CD4-positive, alpha-beta memory T cell (primary cell): ENCODE measurements at regions of chr1 and their contacts with region 1.

Region 1: GRCh38 chr1:211830330-211831142 is at the start of gene LPGAT1:
- DNase-seq: peak; percentile 62 to 78 (median 64)
- H3K4me3 ChIP-seq: peak within 1 kb of the TSS; percentile 43 to 69
- H3K4me3 Mint-ChIP-seq: peak within 1 kb of the TSS; percentile 90 to 95 (median 92)
- H3K27ac ChIP-seq: peak within 1 kb of the TSS; percentile 72
- H3K27ac Mint-ChIP-seq: peak within 1 kb of the TSS; percentile 86 to 96 (median 92)
- H3K4me1 ChIP-seq: peaks cover 68% of the 10 kb centered on the region
- H3K4me1 Mint-ChIP-seq: peaks cover 52 to 76% (median 59%) of the 10 kb centered on the region in 4 donors
- H3K27me3 ChIP-seq: no peaks in the 10 kb centered on the region
- H3K27me3 Mint-ChIP-seq: no peaks in the 10 kb centered on the region
- total RNA-seq, gene LPGAT1: 29.7 to 31.1 TPM

Region 2: GRCh38 chr1:211648980-211649934 is 181.3 kb before region 1 on chr1:
- CTCF ChIA-PET with region 1: no interaction called
- POLR2A ChIA-PET with region 1: no interaction called
- intact Hi-C with region 1: no loop called
- DNase-seq: peak in 3 of 5 donors; percentile 12 to 29 (median 27)
- H3K4me3 ChIP-seq: no peak overlapping the region
- H3K4me3 Mint-ChIP-seq: no peak overlapping the region
- H3K27ac ChIP-seq: no peak overlapping the region
- H3K27ac Mint-ChIP-seq: no peak overlapping the region
- H3K4me1 ChIP-seq: no peaks in the 10 kb centered on the region
- H3K4me1 Mint-ChIP-seq: peaks cover 0 to 1% (median 0%) of the 10 kb centered on the region in 4 donors
- H3K27me3 ChIP-seq: no peaks in the 10 kb centered on the region
- H3K27me3 Mint-ChIP-seq: no peaks in the 10 kb centered on the region

Region 3: DNA sequence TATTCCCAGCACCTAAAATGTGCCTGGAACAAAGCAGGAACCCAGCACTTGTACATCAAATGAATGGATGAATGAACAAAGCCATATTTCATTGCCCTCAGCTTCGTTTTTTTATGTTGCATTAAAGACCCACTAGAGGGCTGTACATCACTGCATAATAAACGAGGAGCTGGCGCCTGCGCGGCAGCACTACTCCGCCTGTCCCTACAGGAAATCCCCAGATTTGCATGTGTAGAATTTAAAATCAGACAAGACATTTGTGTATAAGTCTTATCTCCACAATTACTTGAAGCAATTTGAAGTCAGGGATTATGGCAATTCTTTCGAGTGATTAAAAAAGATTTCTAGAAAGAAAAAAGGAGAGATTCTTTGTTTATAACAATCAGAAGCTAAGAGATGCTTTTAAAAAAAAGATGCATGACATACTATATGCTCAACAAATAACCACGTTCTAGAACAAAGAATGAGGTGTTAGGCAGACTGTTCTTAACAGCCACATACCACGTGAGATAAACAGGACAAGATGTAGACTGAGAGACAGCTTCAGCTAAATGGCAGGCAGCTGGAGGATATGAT is 149.7 kb before region 1 on chr1:
- CTCF ChIA-PET with region 1: interaction called, 4 read pairs
- POLR2A ChIA-PET with region 1: interaction called, 3 read pairs
- intact Hi-C with region 1: loop called (anchors 2 kb)
- DNase-seq: peak; percentile 76 to 83 (median 82)
- H3K4me3 ChIP-seq: no peak overlapping the region
- H3K4me3 Mint-ChIP-seq: peak overlapping the region in 4 of 8 donors; percentile 0 to 56 (median 17)
- H3K27ac ChIP-seq: peak overlapping the region; percentile 61
- H3K27ac Mint-ChIP-seq: peak overlapping the region; percentile 77 to 98 (median 92)
- H3K4me1 ChIP-seq: peaks cover 15% of the 10 kb centered on the region
- H3K4me1 Mint-ChIP-seq: peaks cover 9 to 26% (median 12%) of the 10 kb centered on the region in 4 donors
- H3K27me3 ChIP-seq: no peaks in the 10 kb centered on the region
- H3K27me3 Mint-ChIP-seq: no peaks in the 10 kb centered on the region

Region 4: GRCh38 chr1:211789641-211790464 is 40.7 kb before region 1 on chr1:
- CTCF ChIA-PET with region 1: no interaction called
- POLR2A ChIA-PET with region 1: no interaction called
- intact Hi-C with region 1: loop called (anchors 5 kb)
- DNase-seq: no peak
- H3K4me3 ChIP-seq: no peak overlapping the region
- H3K4me3 Mint-ChIP-seq: no peak overlapping the region
- H3K27ac ChIP-seq: no peak overlapping the region
- H3K27ac Mint-ChIP-seq: no peak overlapping the region
- H3K4me1 ChIP-seq: no peaks in the 10 kb centered on the region
- H3K4me1 Mint-ChIP-seq: no peaks in the 10 kb centered on the region
- H3K27me3 ChIP-seq: no peaks in the 10 kb centered on the region
- H3K27me3 Mint-ChIP-seq: no peaks in the 10 kb centered on the region

Region 5: DNA sequence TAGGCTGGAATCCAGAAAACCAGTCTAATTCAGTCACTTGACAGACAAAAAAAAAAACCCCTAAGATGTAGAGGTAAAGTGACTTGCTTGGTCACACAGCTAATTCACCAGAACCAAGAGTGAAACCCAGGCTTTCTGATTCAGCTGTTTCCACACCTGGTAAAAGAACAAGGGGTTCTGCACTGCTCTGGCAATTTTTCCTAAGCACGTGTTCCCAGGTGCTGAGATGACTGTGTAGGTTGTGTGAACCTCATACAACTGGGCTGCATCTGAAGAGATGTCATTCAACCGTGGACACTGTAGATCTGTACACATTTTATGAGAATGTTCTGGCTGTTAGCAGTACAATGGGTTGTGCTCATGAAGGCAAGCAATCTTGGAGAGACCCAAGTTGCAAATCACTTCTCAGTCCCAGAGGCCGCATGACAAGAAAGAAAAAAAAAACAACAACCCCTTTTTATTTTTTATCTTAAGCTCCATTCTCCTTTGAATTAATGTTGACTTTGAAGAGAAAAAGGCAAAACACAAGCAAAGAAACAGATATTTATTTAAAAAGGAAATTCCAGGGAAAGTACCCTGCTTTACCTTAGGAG is 109.4 kb after region 1 on chr1:
- CTCF ChIA-PET with region 1: no interaction called
- POLR2A ChIA-PET with region 1: no interaction called
- intact Hi-C with region 1: loop called (anchors 5 kb)
- DNase-seq: no peak
- H3K4me3 ChIP-seq: no peak overlapping the region
- H3K4me3 Mint-ChIP-seq: peak overlapping the region in 2 of 8 donors; percentile 45 to 48
- H3K27ac ChIP-seq: no peak overlapping the region
- H3K27ac Mint-ChIP-seq: peak overlapping the region in 5 of 7 donors; percentile 5 to 57 (median 39)
- H3K4me1 ChIP-seq: peaks cover 32% of the 10 kb centered on the region
- H3K4me1 Mint-ChIP-seq: peaks cover 18 to 36% (median 23%) of the 10 kb centered on the region in 4 donors
- H3K27me3 ChIP-seq: no peaks in the 10 kb centered on the region
- H3K27me3 Mint-ChIP-seq: no peaks in the 10 kb centered on the region

Region 6: GRCh38 chr1:212432706-212433576 is 602.4 kb after region 1 on chr1 and contains the start of gene NENF:
- CTCF ChIA-PET with region 1: no interaction called
- POLR2A ChIA-PET with region 1: no interaction called
- intact Hi-C with region 1: loop called (anchors 10 kb)
- DNase-seq: peak; percentile 68 to 79 (median 72)
- H3K4me3 ChIP-seq: peak within 1 kb of the TSS; percentile 56 to 63
- H3K4me3 Mint-ChIP-seq: peak within 1 kb of the TSS; percentile 77 to 86 (median 83)
- H3K27ac ChIP-seq: peak within 1 kb of the TSS; percentile 29
- H3K27ac Mint-ChIP-seq: peak within 1 kb of the TSS in 6 of 7 donors; percentile 31 to 86 (median 74)
- H3K4me1 ChIP-seq: peaks cover 20% of the 10 kb centered on the region
- H3K4me1 Mint-ChIP-seq: peaks cover 10 to 35% (median 18%) of the 10 kb centered on the region in 4 donors
- H3K27me3 ChIP-seq: no peaks in the 10 kb centered on the region
- H3K27me3 Mint-ChIP-seq: peaks cover 1 to 3% of the 10 kb centered on the region in 2 donors
- total RNA-seq, gene NENF: 18.7 to 21.0 TPM